ENCODE measurements at regions of chr7 and their contacts with region 1.

Region 1: GRCh38 chr7:106736508-106737201 is 75.7 kb upstream of the CCDC71L start:
- DNase-seq: no peak

Region 2: GRCh38 chr7:106542550-106543220 is 194.0 kb before region 1 on chr7:
- intact Hi-C with region 1: loop called (anchors 10 kb)
- DNase-seq: no peak

Region 3: DNA sequence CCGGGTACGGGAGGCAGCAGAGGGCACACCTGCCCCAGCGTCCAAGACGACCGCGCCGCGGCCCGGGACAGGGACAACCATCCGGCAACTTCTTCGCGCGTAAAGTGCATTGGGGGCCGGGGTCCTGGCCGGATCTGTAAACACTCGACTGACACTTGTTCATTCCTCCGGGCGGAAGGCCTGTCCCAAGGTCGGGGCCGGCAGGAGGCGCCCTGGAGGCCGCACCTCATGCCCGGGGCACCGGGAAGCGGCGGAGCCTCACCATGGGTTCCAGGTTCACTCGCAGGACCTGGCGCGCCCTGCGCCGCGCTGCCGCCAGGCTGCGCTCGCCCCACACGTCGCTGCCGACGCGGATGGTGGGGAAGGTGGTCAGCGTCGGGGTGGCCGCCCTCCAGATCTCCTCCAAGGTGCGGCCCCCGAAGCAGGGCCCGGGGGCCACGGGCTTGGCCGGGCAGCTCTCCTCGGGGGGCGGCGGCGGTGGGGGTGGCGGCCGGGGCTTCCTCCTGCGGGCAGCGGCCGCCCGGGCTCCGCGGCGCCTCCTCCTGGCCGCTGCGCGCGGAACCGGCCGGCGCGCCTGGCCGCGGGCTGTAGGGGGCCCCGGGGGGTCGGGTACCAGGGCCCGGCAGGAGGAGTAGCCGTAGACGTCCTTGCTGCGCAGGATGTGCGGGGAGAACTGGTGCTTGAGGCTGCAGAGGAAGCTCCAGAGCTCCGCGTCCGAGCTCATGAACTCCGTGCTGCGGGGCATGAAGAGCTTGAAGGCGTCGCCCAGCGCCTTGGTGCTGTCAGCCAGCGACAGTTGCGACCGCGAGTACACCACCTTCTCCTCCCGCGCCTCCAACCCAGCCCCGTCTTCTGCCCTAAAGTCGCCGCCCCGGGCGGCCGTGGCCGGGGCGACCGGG is 76.4 kb before region 1 on chr7:
- intact Hi-C with region 1: loop called (anchors 5 kb)
- DNase-seq: peak; percentile 18 to 88 (median 46)